Activated CD4-positive, alpha-beta T cell treated with anti-CD3 and anti-CD28 coated beads, Interleukin-2, amount 10 ng/mL, durations not matched to agents 24 days and 14 days (primary cell): ENCODE measurements at regions of chr4 and their contacts with region 1.

Region 1: GRCh38 chr4:89077761-89078160 is 20.8 kb upstream of the FAM13A start:
- DNase-seq: no peak
- H3K4me3 Mint-ChIP-seq: no peak overlapping the region
- H3K27ac Mint-ChIP-seq: no peak overlapping the region
- H3K4me1 Mint-ChIP-seq: peaks cover 3% of the 10 kb centered on the region
- H3K27me3 Mint-ChIP-seq: no peaks in the 10 kb centered on the region

Region 2: GRCh38 chr4:89056953-89057398 is 20.8 kb before region 1 on chr4 and contains the start of gene FAM13A:
- intact Hi-C with region 1: no loop called
- DNase-seq: no peak
- H3K4me3 Mint-ChIP-seq: no peak within 1 kb of the TSS
- H3K27ac Mint-ChIP-seq: no peak within 1 kb of the TSS
- H3K4me1 Mint-ChIP-seq: peaks cover 5% of the 10 kb centered on the region
- H3K27me3 Mint-ChIP-seq: peaks cover 8% of the 10 kb centered on the region
- total RNA-seq, gene FAM13A: 3.0 and 5.3 TPM in 2 replicates

Region 3: DNA sequence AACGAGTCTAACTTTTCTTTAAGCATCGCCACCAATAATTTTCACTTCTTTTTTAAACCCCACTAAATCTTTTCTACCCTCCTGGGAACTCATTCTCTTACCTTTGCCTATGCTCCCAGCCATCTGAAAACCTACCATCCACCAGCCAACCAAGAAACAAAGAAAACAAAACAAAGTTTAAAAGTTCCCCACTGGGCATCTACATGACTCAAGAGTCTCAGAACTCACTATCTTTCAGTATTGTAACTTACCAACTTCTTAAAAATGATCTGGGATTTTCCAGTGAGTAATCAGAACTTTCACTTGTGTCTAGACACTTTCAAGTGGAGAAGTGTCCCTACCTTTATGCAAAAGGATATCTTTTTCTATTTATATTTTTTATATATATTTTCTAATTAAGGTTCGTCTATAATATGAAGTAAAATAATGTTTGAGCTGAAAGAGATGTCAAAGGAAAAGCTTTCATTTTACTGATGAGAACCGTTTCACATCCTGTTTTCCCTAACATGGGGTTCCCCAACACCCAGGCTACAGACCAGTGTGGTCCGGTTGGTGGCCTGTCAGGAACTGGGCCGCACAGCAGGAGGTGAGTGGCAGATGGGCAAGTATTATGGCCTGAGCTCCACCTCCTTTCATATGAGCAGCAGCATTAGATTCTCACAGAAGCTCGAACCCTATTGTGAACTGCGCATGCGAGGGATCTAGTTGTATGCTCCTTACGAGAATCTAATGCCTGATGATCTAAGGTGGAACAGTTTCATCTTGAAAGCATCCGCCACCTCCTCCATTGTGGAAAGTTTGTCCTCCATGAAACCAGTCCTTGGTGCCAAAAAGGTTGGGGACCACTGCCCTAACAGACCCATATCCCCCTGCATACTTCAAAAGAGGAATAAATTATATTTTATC is 23.7 kb after region 1 on chr4:
- intact Hi-C with region 1: loop called (anchors 1 kb)
- DNase-seq: peak; percentile 51
- H3K4me3 Mint-ChIP-seq: no peak overlapping the region
- H3K27ac Mint-ChIP-seq: peak overlapping the region; percentile 73
- H3K4me1 Mint-ChIP-seq: peaks cover 10% of the 10 kb centered on the region
- H3K27me3 Mint-ChIP-seq: peaks cover 2% of the 10 kb centered on the region